Activated CD4-positive, alpha-beta T cell treated with anti-CD3 and anti-CD28 coated beads for 36 hours (primary cell): ENCODE measurements at regions of chr2 and their contacts with region 1.

Region 1: DNA sequence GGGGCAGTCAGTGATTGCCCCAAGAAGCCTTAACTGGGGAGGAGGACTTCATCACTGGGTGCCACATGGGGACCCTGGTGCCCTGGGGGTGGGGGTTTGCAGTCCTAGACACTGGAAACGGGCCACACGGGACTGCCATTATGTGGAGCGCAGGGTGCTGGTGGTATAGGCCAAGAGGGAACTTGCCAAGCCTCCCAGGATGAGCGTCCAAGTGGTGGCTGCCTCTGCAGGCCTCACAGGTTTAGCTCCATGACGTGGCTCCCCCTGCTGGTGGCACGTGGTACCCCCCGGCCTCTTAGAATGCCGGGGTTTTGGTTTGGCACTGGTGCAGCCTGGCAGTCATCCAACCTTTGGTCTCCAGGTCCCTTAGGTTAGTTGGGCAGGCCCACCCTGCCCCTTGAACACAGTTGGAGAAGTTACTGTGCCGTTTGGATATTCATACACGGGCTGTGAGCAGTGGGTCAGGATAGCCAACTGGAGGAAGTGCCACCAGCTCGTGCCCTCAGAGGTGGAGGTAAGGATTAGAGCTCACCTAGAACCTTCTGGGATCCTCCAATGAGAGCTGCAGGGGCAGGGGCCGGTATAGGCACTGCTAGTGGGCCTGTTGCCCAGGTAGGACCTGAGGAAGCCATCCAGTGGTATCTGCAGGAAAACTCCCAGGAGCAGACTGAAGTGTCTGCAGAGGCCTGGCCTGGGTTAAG is 5.6 kb downstream of the PTMA start:
- DNase-seq: peak; percentile 96
- ATAC-seq: peak; percentile 45
- H3K4me3 Mint-ChIP-seq: peak overlapping the region; percentile 44
- H3K27ac Mint-ChIP-seq: peak overlapping the region; percentile 93
- H3K4me1 Mint-ChIP-seq: peaks cover 37% of the 10 kb centered on the region
- H3K27me3 Mint-ChIP-seq: no peaks in the 10 kb centered on the region

Region 2: DNA sequence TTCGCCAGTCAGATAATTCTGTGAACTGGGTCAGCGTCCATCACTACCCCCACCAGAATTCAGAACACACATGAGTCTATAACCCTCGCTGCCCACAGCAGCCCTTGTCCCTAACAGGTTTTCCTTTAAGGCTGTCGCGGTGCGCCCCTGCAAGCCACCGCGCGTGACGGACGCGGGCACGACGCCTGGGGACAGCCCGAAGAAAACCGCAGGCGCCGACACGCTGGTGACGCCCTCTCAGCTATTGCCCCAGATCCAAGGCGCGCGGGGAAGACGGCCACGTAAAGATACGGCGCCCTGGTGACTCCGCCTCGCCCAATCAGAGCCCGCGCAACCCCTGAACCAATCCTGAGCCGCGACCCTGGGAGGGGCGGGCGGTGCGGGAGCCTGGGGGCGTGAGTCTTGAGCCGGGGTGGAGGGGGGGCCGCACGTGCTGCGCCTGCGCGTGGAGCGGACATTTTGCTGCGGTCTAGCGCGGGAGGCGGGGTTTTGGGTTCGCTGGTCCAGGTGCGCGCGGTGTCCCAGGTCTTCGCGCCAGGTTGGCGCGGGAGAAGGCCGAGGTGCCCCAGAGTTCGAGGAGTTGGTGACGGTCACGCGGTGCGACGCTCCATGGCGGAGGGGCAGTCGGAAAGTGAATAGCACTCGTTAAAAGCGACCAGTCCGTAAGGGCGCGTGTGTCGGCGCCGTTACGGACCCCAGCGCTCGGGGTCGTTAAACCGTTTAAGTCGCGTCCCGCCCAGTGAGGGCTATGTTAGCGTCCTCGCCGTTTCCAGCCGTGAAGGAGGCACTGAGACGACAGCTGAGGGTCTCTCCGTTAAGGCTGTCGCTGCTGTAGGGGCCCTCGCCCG is 199.6 kb before region 1 on chr2:
- CTCF ChIA-PET with region 1: interaction called, 5 read pairs
- POLR2A ChIA-PET with region 1: interaction called, 4 read pairs
- intact Hi-C with region 1: loop called in 1 of 2 experiments (anchors 2 kb)
- DNase-seq: peak; percentile 99
- ATAC-seq: peak; percentile 99
- H3K4me3 Mint-ChIP-seq: peak overlapping the region; percentile 83
- H3K27ac Mint-ChIP-seq: peak overlapping the region; percentile 95
- H3K4me1 Mint-ChIP-seq: peaks cover 13% of the 10 kb centered on the region
- H3K27me3 Mint-ChIP-seq: no peaks in the 10 kb centered on the region

Region 3: GRCh38 chr2:231648587-231649174 is 65.2 kb before region 1 on chr2:
- CTCF ChIA-PET with region 1: interaction called, 20 read pairs
- POLR2A ChIA-PET with region 1: no interaction called
- intact Hi-C with region 1: loop called in 1 of 2 experiments (anchors 1 kb)
- DNase-seq: peak; percentile 81
- ATAC-seq: peak; percentile 96
- H3K4me3 Mint-ChIP-seq: no peak overlapping the region
- H3K27ac Mint-ChIP-seq: no peak overlapping the region
- H3K4me1 Mint-ChIP-seq: peaks cover 2% of the 10 kb centered on the region
- H3K27me3 Mint-ChIP-seq: no peaks in the 10 kb centered on the region

Region 4: DNA sequence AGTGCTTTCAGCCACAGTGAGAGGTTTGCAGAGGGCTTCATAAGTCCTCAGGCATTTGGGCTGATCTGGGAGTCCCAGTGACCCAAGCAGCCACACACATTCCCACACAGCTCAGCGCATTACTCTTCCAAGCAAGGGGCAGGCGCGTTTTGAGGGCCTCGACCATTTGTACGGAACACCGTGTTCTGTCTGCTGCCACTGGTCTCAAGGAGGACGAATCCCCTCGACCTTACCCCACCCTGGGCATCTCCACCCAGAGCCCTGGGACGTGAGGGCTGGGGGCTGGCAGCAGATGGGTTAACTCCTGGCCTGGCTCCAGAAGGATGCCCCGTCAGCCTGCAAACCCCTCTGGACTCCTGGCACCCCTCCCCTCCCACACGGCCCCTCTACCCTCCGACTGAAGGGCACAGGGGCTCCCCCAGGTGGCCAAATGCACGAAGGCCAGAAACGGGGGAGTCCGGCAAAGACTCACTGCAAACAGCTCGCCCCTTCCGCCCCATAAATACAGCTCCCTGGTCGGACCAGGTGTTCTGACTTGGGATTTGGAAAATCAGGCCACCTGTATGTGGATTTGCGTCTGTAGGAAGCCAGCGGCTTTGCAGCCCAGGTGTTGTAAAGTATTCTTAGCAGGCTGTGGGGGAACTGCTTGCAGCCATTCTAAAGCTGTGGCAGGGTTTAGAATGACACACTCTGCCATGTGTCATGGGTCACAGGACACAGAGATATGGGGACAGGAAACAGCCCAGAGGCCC is 39.1 kb before region 1 on chr2:
- CTCF ChIA-PET with region 1: interaction called, 260 read pairs
- POLR2A ChIA-PET with region 1: interaction called, 42 read pairs
- intact Hi-C with region 1: loop called (anchors 1 kb)
- DNase-seq: peak; percentile 81
- ATAC-seq: peak; percentile 84
- H3K4me3 Mint-ChIP-seq: no peak overlapping the region
- H3K27ac Mint-ChIP-seq: no peak overlapping the region
- H3K4me1 Mint-ChIP-seq: peaks cover 10% of the 10 kb centered on the region
- H3K27me3 Mint-ChIP-seq: no peaks in the 10 kb centered on the region

Region 5: GRCh38 chr2:231687133-231687852 is 26.6 kb before region 1 on chr2:
- CTCF ChIA-PET with region 1: interaction called, 100 read pairs
- POLR2A ChIA-PET with region 1: interaction called, 4 read pairs
- intact Hi-C with region 1: loop called in 1 of 2 experiments (anchors 1 kb)
- DNase-seq: peak; percentile 82
- ATAC-seq: peak; percentile 93
- H3K4me3 Mint-ChIP-seq: no peak overlapping the region
- H3K27ac Mint-ChIP-seq: no peak overlapping the region
- H3K4me1 Mint-ChIP-seq: peaks cover 2% of the 10 kb centered on the region
- H3K27me3 Mint-ChIP-seq: peaks cover 2% of the 10 kb centered on the region

Region 6: GRCh38 chr2:231726228-231726627 is 12.3 kb after region 1 on chr2:
- CTCF ChIA-PET with region 1: interaction called, 37 read pairs
- POLR2A ChIA-PET with region 1: interaction called, 3 read pairs
- intact Hi-C with region 1: no loop called
- DNase-seq: no peak
- ATAC-seq: no peak
- H3K4me3 Mint-ChIP-seq: no peak overlapping the region
- H3K27ac Mint-ChIP-seq: no peak overlapping the region
- H3K4me1 Mint-ChIP-seq: no peaks in the 10 kb centered on the region
- H3K27me3 Mint-ChIP-seq: no peaks in the 10 kb centered on the region